ENCODE measurements at regions of chr2 and their contacts with region 1.

Region 1: GRCh38 chr2:179513181-179513580 is 248.5 kb upstream of the SESTD1 start:
- DNase-seq: no peak
- H3K4me3 Mint-ChIP-seq: no peak overlapping the region
- H3K27ac Mint-ChIP-seq: no peak overlapping the region
- H3K4me1 Mint-ChIP-seq: no peaks in the 10 kb centered on the region
- H3K27me3 Mint-ChIP-seq: no peaks in the 10 kb centered on the region
- CTCF ChIP-seq: no peak

Region 2: GRCh38 chr2:178530625-178531142 is 982.5 kb before region 1 on chr2:
- CTCF ChIA-PET with region 1: no interaction called
- POLR2A ChIA-PET with region 1: no interaction called
- intact Hi-C with region 1: no loop called
- DNase-seq: peak; percentile 34
- H3K4me3 Mint-ChIP-seq: no peak overlapping the region
- H3K27ac Mint-ChIP-seq: no peak overlapping the region
- H3K4me1 Mint-ChIP-seq: peaks cover 11% of the 10 kb centered on the region
- H3K27me3 Mint-ChIP-seq: no peaks in the 10 kb centered on the region
- CTCF ChIP-seq: no peak

Region 3: GRCh38 chr2:179479947-179480346 is 33.2 kb before region 1 on chr2:
- CTCF ChIA-PET with region 1: no interaction called
- POLR2A ChIA-PET with region 1: no interaction called
- intact Hi-C with region 1: loop called (anchors 2 kb)
- DNase-seq: no peak
- H3K4me3 Mint-ChIP-seq: no peak overlapping the region
- H3K27ac Mint-ChIP-seq: no peak overlapping the region
- H3K4me1 Mint-ChIP-seq: no peaks in the 10 kb centered on the region
- H3K27me3 Mint-ChIP-seq: no peaks in the 10 kb centered on the region
- CTCF ChIP-seq: no peak

Measured in MCF 10A (cell line).